ENCODE measurements at regions of chr2 and their contacts with region 1.

Region 1: DNA sequence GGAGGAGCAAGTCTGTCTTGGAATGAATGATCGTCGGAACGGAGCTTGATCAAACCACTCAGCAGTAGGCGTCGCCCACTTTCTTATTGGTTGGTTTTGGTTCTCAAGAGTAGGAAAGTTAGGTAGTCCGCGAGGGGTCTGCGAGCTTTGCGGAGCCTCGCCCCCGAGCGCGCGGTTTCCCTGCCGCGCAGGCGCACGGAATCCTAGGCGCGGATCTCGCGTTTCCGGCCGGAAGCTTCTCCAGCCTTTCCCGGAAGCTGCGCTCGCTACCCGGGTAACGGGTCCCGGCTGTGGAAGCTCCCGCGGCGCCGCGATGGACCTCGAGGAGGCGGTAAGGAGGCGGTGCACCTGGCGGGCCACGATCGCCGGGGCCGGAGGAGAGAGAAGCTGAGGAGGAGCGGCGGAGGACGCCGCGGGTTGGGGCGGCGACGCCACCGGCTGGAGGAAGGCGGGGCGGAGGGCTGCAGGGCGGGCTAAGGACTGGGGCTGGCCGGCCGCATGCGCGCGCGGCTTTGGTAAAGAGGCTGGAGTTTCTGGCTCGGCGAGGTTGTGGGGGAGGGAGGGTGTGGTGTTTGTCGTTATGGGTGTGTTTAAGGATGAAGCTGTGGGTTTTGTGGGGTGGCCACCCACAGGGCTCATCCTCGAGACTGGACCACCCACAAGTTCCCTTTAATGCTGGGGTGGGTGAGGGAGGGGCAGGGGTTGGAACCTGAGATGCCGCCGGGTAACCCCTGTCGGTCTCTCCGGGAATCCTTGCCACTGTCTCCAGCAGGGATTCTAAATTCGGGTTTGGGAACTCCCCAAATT is at the start of gene TAF1B:
- DNase-seq: peak; percentile 94 to 96
- H3K4me3 ChIP-seq: peak within 1 kb of the TSS; percentile 74
- H3K4me3 Mint-ChIP-seq: peak within 1 kb of the TSS; percentile 89
- H3K27ac Mint-ChIP-seq: peak within 1 kb of the TSS; percentile 89
- H3K4me1 ChIP-seq: 0 out of 2 replicates have a peak, but pooled peaks cover 8% of the 10 kb centered on the region
- H3K4me1 Mint-ChIP-seq: peaks cover 22% of the 10 kb centered on the region
- H3K27me3 ChIP-seq: no peaks in the 10 kb centered on the region
- H3K27me3 Mint-ChIP-seq: no peaks in the 10 kb centered on the region
- CTCF ChIP-seq: peak; percentile 26 to 30
- total RNA-seq, gene TAF1B: 24.8 and 25.3 TPM in 2 replicates

Region 2: DNA sequence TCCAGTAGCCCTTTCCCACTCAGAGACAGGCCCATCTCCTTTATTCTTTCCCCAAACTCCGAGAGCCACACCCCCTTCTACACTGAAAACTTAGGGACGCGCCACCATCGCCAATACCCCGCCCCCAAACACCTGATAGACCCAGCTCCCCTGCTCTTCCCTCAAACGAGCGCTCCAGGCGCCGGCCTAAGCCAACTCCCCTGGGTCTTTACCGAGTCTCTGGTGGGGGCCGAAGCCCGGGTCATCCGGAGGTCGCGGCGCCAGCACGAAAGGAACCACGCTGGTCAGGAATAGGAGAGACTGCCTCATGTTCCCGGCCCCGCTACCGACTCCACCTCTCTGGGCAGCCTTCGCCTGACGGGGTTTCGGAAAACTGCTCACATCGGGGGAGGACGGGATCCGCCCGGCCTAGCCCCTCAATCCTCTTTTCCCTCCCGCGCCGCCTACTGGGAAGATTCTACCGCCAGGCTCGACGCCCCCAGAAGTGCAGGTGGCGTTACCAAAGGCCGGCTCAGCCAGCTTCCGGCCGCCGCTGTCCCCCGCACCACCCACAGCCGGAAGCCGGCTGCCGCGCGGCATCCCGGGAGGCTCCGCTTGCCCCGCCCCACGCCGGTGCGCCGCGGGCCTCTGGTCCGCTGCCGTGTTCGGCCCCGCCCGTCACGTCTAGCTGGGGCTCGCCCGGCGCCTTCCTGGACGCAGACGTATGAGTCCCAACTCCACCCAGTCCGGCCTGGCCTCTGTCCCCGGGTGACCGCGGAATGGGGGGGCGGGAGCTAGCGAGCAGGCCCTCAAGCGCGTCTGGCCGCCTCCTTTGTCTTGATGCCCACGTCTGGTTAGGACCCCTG is 287.9 kb before region 1 on chr2 and contains the start of gene ADAM17:
- CTCF ChIA-PET with region 1: interaction called, 4 read pairs
- POLR2A ChIA-PET with region 1: interaction called, 13 read pairs
- intact Hi-C with region 1: no loop called
- DNase-seq: peak; percentile 97 to 98
- H3K4me3 ChIP-seq: peak within 1 kb of the TSS; percentile 92
- H3K4me3 Mint-ChIP-seq: peak within 1 kb of the TSS; percentile 91
- H3K27ac Mint-ChIP-seq: peak within 1 kb of the TSS; percentile 90
- H3K4me1 ChIP-seq: peaks cover 27% of the 10 kb centered on the region; the same call in 1 of the 2 replicates
- H3K4me1 Mint-ChIP-seq: peaks cover 30% of the 10 kb centered on the region
- H3K27me3 ChIP-seq: no peaks in the 10 kb centered on the region
- H3K27me3 Mint-ChIP-seq: no peaks in the 10 kb centered on the region
- CTCF ChIP-seq: peak; percentile 61 to 69
- total RNA-seq, gene ADAM17: 36.3 and 40.5 TPM in 2 replicates

Region 3: GRCh38 chr2:9630749-9631483 is 212.5 kb before region 1 on chr2 and contains the start of gene YWHAQ:
- CTCF ChIA-PET with region 1: interaction called, 3 read pairs
- POLR2A ChIA-PET with region 1: interaction called, 13 read pairs
- intact Hi-C with region 1: no loop called
- DNase-seq: peak; percentile 99 to 100
- H3K4me3 ChIP-seq: peak within 1 kb of the TSS; percentile 89
- H3K4me3 Mint-ChIP-seq: peak within 1 kb of the TSS; percentile 93
- H3K27ac Mint-ChIP-seq: peak within 1 kb of the TSS; percentile 92
- H3K4me1 ChIP-seq: peaks cover 25% of the 10 kb centered on the region
- H3K4me1 Mint-ChIP-seq: peaks cover 41% of the 10 kb centered on the region
- H3K27me3 ChIP-seq: no peaks in the 10 kb centered on the region
- H3K27me3 Mint-ChIP-seq: no peaks in the 10 kb centered on the region
- CTCF ChIP-seq: no peak
- total RNA-seq, gene YWHAQ: 344 and 365 TPM in 2 replicates

Region 4: DNA sequence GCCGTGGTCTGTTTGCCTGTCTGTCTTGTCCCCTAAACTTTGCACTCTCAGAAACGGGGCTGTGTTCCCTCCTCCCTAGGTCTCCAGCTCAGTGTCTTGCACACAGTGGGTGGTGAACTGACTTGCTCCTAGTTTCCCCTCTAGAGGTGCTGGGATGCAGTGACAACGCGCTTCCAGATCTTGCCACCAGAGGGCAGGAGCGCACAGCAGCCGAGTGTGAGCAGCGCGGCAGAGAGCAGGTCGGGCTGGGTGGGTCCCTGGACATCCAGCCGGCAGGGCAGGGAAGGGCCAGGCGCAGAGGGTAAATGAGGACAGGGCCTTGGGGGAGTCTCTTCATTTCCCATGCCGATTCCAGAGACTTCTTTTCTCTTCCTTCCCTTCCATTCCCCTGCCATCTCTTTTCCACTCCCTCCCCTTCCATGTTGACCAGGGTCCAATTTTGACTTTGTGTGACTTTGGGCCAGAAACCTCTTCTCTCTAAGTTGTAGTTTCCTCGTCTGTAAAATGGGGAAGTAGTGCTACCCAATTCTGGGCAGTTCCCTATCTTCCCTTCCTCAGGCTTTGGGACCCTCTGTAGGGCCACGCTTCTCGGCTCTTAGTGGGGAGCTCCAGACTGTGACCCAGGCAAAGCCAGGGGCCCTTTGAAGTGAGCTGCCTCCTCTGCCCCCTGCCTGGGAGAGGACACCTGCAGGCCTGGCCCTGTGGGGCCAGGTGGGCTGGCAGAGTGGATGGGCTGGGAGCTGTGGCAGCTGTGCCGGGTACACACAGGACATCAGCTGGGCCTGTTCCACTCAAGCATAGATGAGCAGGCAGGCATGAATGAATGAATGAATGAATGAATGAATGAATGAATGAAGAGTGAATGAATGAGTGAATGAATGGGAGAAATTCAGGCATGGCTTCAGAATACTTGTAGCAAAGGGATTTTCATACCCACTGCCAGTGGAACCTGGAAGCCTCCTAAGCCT is 43.5 kb before region 1 on chr2:
- CTCF ChIA-PET with region 1: interaction called, 10 read pairs
- POLR2A ChIA-PET with region 1: no interaction called
- intact Hi-C with region 1: loop called (anchors 5 kb)
- DNase-seq: peak; percentile 88 to 93
- H3K4me3 ChIP-seq: no peak overlapping the region
- H3K4me3 Mint-ChIP-seq: peak overlapping the region; percentile 56
- H3K27ac Mint-ChIP-seq: no peak overlapping the region
- H3K4me1 ChIP-seq: peaks cover 45% of the 10 kb centered on the region
- H3K4me1 Mint-ChIP-seq: peaks cover 29% of the 10 kb centered on the region
- H3K27me3 ChIP-seq: no peaks in the 10 kb centered on the region
- H3K27me3 Mint-ChIP-seq: no peaks in the 10 kb centered on the region
- CTCF ChIP-seq: peak; percentile 95 to 99

Region 5: GRCh38 chr2:9813312-9814133 is 29.9 kb before region 1 on chr2:
- CTCF ChIA-PET with region 1: interaction called, 23 read pairs
- POLR2A ChIA-PET with region 1: interaction called, 6 read pairs
- intact Hi-C with region 1: loop called (anchors 1 kb)
- DNase-seq: peak; percentile 66 to 81
- H3K4me3 ChIP-seq: 0 out of 2 replicates have a peak overlapping the region, but pooled peaks have one; percentile 21
- H3K4me3 Mint-ChIP-seq: peak overlapping the region; percentile 28
- H3K27ac Mint-ChIP-seq: no peak overlapping the region
- H3K4me1 ChIP-seq: no peaks in the 10 kb centered on the region
- H3K4me1 Mint-ChIP-seq: no peaks in the 10 kb centered on the region
- H3K27me3 ChIP-seq: no peaks in the 10 kb centered on the region
- H3K27me3 Mint-ChIP-seq: no peaks in the 10 kb centered on the region
- CTCF ChIP-seq: peak; percentile 95 to 96

Region 6: GRCh38 chr2:9830690-9831410 is 12.6 kb before region 1 on chr2:
- CTCF ChIA-PET with region 1: no interaction called
- POLR2A ChIA-PET with region 1: interaction called, 5 read pairs
- intact Hi-C with region 1: loop called (anchors 1 kb)
- DNase-seq: peak in 1 of 2 experiments; percentile 41
- H3K4me3 ChIP-seq: no peak overlapping the region
- H3K4me3 Mint-ChIP-seq: no peak overlapping the region
- H3K27ac Mint-ChIP-seq: peak overlapping the region; percentile 65
- H3K4me1 ChIP-seq: peaks cover 27% of the 10 kb centered on the region
- H3K4me1 Mint-ChIP-seq: peaks cover 21% of the 10 kb centered on the region
- H3K27me3 ChIP-seq: no peaks in the 10 kb centered on the region
- H3K27me3 Mint-ChIP-seq: no peaks in the 10 kb centered on the region
- CTCF ChIP-seq: no peak

Region 7: GRCh38 chr2:9951272-9951972 is 108.0 kb after region 1 on chr2 and contains the start of gene GRHL1:
- CTCF ChIA-PET with region 1: no interaction called
- POLR2A ChIA-PET with region 1: no interaction called
- intact Hi-C with region 1: loop called (anchors 5 kb)
- DNase-seq: peak; percentile 92 to 98
- H3K4me3 ChIP-seq: peak within 1 kb of the TSS; percentile 86
- H3K4me3 Mint-ChIP-seq: peak within 1 kb of the TSS; percentile 79
- H3K27ac Mint-ChIP-seq: peak within 1 kb of the TSS; percentile 7
- H3K4me1 ChIP-seq: peaks cover 26% of the 10 kb centered on the region
- H3K4me1 Mint-ChIP-seq: peaks cover 14% of the 10 kb centered on the region
- H3K27me3 ChIP-seq: no peaks in the 10 kb centered on the region
- H3K27me3 Mint-ChIP-seq: peaks cover 4% of the 10 kb centered on the region
- CTCF ChIP-seq: no peak
- total RNA-seq, gene GRHL1: 10.5 and 11.6 TPM in 2 replicates

Measured in Caco-2 (cell line).